Naive thymus-derived CD4-positive, alpha-beta T cell (primary cell): ENCODE measurements at regions of chr21 and their contacts with region 1.

Region 1: GRCh38 chr21:46228345-46229051 is at the start of gene LSS:
- DNase-seq: peak; percentile 91 to 97 (median 96)
- ATAC-seq: peak; percentile 98
- H3K4me3 ChIP-seq: peak within 1 kb of the TSS; percentile 65
- H3K4me3 Mint-ChIP-seq: peak within 1 kb of the TSS; percentile 81 to 99 (median 94)
- H3K27ac ChIP-seq: peak within 1 kb of the TSS; percentile 83
- H3K27ac Mint-ChIP-seq: peak within 1 kb of the TSS; percentile 83 to 98 (median 94)
- H3K4me1 ChIP-seq: peaks cover 15 to 18% of the 10 kb centered on the region in 2 donors
- H3K4me1 Mint-ChIP-seq: peaks cover 17 to 56% (median 43%) of the 10 kb centered on the region in 7 donors
- H3K27me3 ChIP-seq: no peaks in the 10 kb centered on the region
- H3K27me3 Mint-ChIP-seq: no peaks in the 10 kb centered on the region
- total RNA-seq, gene LSS: 41.3 to 64.4 (median 44.9) TPM

Region 2: GRCh38 chr21:45973659-45974072 is 254.8 kb before region 1 on chr21:
- CTCF ChIA-PET with region 1: interaction called, 3 read pairs
- POLR2A ChIA-PET with region 1: no interaction called
- intact Hi-C with region 1: loop called (anchors 2 to 5 kb)
- DNase-seq: peak; percentile 59 to 84 (median 77)
- ATAC-seq: peak; percentile 94
- H3K4me3 ChIP-seq: peak overlapping the region; percentile 78
- H3K4me3 Mint-ChIP-seq: peak overlapping the region; percentile 75 to 94 (median 92)
- H3K27ac ChIP-seq: peak overlapping the region; percentile 50
- H3K27ac Mint-ChIP-seq: peak overlapping the region in 8 of 9 donors; percentile 41 to 91 (median 80)
- H3K4me1 ChIP-seq: peaks cover 20 to 22% of the 10 kb centered on the region in 2 donors
- H3K4me1 Mint-ChIP-seq: peaks cover 5 to 28% (median 18%) of the 10 kb centered on the region in 7 donors
- H3K27me3 ChIP-seq: peaks cover 0 to 13% of the 10 kb centered on the region in 2 donors
- H3K27me3 Mint-ChIP-seq: peaks cover 0 to 44% (median 10%) of the 10 kb centered on the region in 5 donors

Region 3: DNA sequence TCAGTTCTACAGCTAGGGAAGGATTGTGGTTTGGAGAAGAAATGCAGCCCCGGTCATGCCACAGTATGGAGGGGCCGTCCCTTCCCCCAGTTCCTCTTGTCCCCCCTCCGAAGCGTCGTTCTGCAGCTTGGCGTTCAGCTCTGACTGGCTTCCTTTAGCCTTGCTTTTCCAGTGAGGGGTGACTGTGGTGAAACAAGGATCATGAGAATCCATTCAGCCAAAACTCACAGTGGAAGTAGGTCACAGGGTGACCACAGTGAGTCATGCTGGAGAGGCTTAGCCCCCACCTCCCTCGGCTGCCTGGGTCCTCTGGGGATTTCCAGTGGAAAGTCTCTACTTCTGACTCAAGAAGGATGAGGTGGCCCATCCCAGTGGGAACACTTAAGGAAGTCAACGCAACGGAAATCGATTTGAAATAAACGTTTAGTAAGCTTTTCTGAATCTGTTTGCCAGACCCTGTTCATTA is 167.9 kb before region 1 on chr21:
- CTCF ChIA-PET with region 1: no interaction called
- POLR2A ChIA-PET with region 1: no interaction called
- intact Hi-C with region 1: no loop called
- DNase-seq: peak in 2 of 9 donors; percentile 0 to 34
- ATAC-seq: peak; percentile 14
- H3K4me3 ChIP-seq: no peak overlapping the region
- H3K4me3 Mint-ChIP-seq: no peak overlapping the region
- H3K27ac ChIP-seq: no peak overlapping the region
- H3K27ac Mint-ChIP-seq: no peak overlapping the region
- H3K4me1 ChIP-seq: peaks cover 7 to 11% of the 10 kb centered on the region in 2 donors
- H3K4me1 Mint-ChIP-seq: peaks cover 8 to 22% (median 17%) of the 10 kb centered on the region in 7 donors
- H3K27me3 ChIP-seq: peaks cover 0 to 5% of the 10 kb centered on the region in 2 donors
- H3K27me3 Mint-ChIP-seq: peaks cover 17 to 58% (median 47%) of the 10 kb centered on the region in 5 donors

Region 4: DNA sequence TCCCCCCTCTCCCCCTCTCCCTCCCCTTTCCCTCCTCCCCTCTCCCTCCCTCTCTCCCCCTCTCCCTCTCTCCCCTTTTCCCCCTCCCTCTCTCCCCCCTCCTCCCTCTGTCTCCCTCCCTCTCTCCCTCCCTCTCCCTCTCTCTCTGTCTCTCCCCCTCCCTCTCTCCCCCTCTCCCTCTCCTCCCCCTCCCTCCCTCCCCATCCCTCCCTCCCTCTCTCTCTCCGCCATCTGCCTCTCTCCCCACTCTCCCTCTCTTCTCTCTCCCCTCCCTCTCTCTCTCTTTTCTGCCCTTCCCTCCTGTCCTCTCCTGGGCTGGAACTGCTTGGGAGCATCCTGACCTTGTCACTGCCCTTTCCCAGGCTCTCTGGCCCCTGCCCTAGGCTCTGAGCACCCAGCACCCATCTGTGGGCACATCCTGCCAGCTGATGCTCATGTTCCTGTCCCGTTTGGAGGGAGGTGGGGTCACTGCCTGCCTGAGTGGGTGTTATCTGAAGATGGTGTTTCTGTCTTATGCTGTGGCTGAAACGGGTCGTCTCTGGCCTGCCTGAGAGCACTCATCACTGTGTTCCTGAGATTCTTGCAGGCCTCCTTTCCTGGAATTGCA is 83.9 kb before region 1 on chr21:
- CTCF ChIA-PET with region 1: no interaction called
- POLR2A ChIA-PET with region 1: no interaction called
- intact Hi-C with region 1: loop called (anchors 1 to 5 kb)
- DNase-seq: no peak
- ATAC-seq: no peak
- H3K4me3 ChIP-seq: no peak overlapping the region
- H3K4me3 Mint-ChIP-seq: peak overlapping the region in 5 of 10 donors; percentile 29 to 89 (median 80)
- H3K27ac ChIP-seq: no peak overlapping the region
- H3K27ac Mint-ChIP-seq: peak overlapping the region in 6 of 9 donors; percentile 33 to 92 (median 59)
- H3K4me1 ChIP-seq: no peaks in the 10 kb centered on the region
- H3K4me1 Mint-ChIP-seq: peaks cover 6 to 13% (median 8%) of the 10 kb centered on the region in 7 donors
- H3K27me3 ChIP-seq: no peaks in the 10 kb centered on the region
- H3K27me3 Mint-ChIP-seq: no peaks in the 10 kb centered on the region

Region 5: DNA sequence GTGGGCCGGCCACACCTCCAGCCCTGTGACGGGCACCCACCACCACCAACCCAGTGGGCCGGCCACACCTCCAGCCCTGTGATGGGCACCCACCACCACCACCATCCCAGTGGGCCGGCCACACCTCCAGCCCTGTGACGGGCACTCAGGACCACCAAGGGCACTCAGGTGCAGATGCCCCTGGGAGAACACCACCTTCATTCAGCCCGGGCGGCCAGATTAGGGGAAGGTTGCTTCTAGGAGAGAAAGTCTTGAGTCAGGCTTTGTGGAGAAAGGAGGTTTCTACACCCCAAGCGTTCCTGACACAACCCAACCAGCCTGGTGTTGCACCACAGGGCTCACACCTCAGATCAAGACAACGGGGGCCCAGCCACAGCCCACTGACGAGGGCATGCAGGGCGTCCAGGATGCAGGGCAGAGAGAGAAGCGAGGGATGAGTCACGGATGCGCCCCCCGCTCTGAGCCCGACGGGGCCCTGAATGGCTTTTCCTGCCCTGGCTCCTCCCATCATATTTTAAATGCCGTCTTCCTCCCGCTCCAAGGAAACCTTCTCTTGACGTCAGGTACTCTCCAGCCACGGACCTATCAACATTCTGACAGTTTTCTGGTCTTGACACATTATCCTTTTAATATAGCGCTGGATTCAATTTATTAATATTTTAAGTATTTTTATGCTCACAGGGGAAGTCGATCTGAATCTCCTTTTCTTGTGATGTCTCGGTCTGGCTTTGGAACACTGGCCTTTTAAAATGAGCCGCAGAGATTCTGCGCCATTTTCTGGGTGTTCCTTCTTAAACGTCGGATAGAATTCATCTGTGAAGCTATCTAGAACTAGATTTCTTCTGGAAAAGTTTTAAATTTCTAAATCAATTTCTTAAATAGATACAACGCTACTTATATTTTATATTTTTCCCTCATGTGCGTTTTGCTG is 43.6 kb before region 1 on chr21:
- CTCF ChIA-PET with region 1: no interaction called
- POLR2A ChIA-PET with region 1: no interaction called
- intact Hi-C with region 1: loop called (anchors 1 to 2 kb)
- DNase-seq: peak; percentile 48 to 79 (median 74)
- ATAC-seq: peak; percentile 79
- H3K4me3 ChIP-seq: peak overlapping the region; percentile 67
- H3K4me3 Mint-ChIP-seq: peak overlapping the region; percentile 80 to 92 (median 86)
- H3K27ac ChIP-seq: peak overlapping the region; percentile 68
- H3K27ac Mint-ChIP-seq: peak overlapping the region; percentile 75 to 91 (median 86)
- H3K4me1 ChIP-seq: peaks cover 0 to 5% of the 10 kb centered on the region in 2 donors
- H3K4me1 Mint-ChIP-seq: peaks cover 0 to 16% (median 10%) of the 10 kb centered on the region in 7 donors
- H3K27me3 ChIP-seq: no peaks in the 10 kb centered on the region
- H3K27me3 Mint-ChIP-seq: no peaks in the 10 kb centered on the region

Region 6: GRCh38 chr21:46196726-46197125 is 31.8 kb before region 1 on chr21:
- CTCF ChIA-PET with region 1: no interaction called
- POLR2A ChIA-PET with region 1: no interaction called
- intact Hi-C with region 1: no loop called
- DNase-seq: peak in 1 of 9 donors; percentile 13
- ATAC-seq: no peak
- H3K4me3 ChIP-seq: no peak overlapping the region
- H3K4me3 Mint-ChIP-seq: no peak overlapping the region
- H3K27ac ChIP-seq: no peak overlapping the region
- H3K27ac Mint-ChIP-seq: no peak overlapping the region
- H3K4me1 ChIP-seq: no peaks in the 10 kb centered on the region
- H3K4me1 Mint-ChIP-seq: no peaks in the 10 kb centered on the region
- H3K27me3 ChIP-seq: no peaks in the 10 kb centered on the region
- H3K27me3 Mint-ChIP-seq: no peaks in the 10 kb centered on the region

Region 7: GRCh38 chr21:46285761-46286496 is 57.4 kb after region 1 on chr21 and contains the start of gene YBEY:
- CTCF ChIA-PET with region 1: no interaction called
- POLR2A ChIA-PET with region 1: no interaction called
- intact Hi-C with region 1: loop called (anchors 1 kb)
- DNase-seq: peak; percentile 70 to 91 (median 80)
- ATAC-seq: peak; percentile 95
- H3K4me3 ChIP-seq: peak within 1 kb of the TSS; percentile 58
- H3K4me3 Mint-ChIP-seq: peak within 1 kb of the TSS; percentile 89 to 99 (median 98)
- H3K27ac ChIP-seq: peak within 1 kb of the TSS; percentile 86
- H3K27ac Mint-ChIP-seq: peak within 1 kb of the TSS; percentile 92 to 98 (median 97)
- H3K4me1 ChIP-seq: peaks cover 27 to 31% of the 10 kb centered on the region in 2 donors
- H3K4me1 Mint-ChIP-seq: peaks cover 21 to 76% (median 62%) of the 10 kb centered on the region in 7 donors
- H3K27me3 ChIP-seq: no peaks in the 10 kb centered on the region
- H3K27me3 Mint-ChIP-seq: no peaks in the 10 kb centered on the region
- total RNA-seq, gene YBEY: 8.8 to 16.7 (median 15.6) TPM

Region 8: GRCh38 chr21:46334351-46335140 is 106.0 kb after region 1 on chr21:
- CTCF ChIA-PET with region 1: no interaction called
- POLR2A ChIA-PET with region 1: no interaction called
- intact Hi-C with region 1: no loop called
- DNase-seq: no peak
- ATAC-seq: no peak
- H3K4me3 ChIP-seq: no peak overlapping the region
- H3K4me3 Mint-ChIP-seq: no peak overlapping the region
- H3K27ac ChIP-seq: no peak overlapping the region
- H3K27ac Mint-ChIP-seq: no peak overlapping the region
- H3K4me1 ChIP-seq: no peaks in the 10 kb centered on the region
- H3K4me1 Mint-ChIP-seq: peaks cover 0 to 9% (median 4%) of the 10 kb centered on the region in 7 donors
- H3K27me3 ChIP-seq: no peaks in the 10 kb centered on the region
- H3K27me3 Mint-ChIP-seq: no peaks in the 10 kb centered on the region

Region 9: GRCh38 chr21:46458315-46459023 is 230.0 kb after region 1 on chr21 and contains the start of gene DIP2A:
- CTCF ChIA-PET with region 1: no interaction called
- POLR2A ChIA-PET with region 1: no interaction called
- intact Hi-C with region 1: loop called (anchors 1 to 5 kb)
- DNase-seq: peak; percentile 93 to 97 (median 96)
- ATAC-seq: peak; percentile 98
- H3K4me3 ChIP-seq: peak within 1 kb of the TSS; percentile 81
- H3K4me3 Mint-ChIP-seq: peak within 1 kb of the TSS; percentile 86 to 96 (median 92)
- H3K27ac ChIP-seq: peak within 1 kb of the TSS; percentile 94
- H3K27ac Mint-ChIP-seq: peak within 1 kb of the TSS; percentile 85 to 97 (median 91)
- H3K4me1 ChIP-seq: peaks cover 4 to 17% of the 10 kb centered on the region in 2 donors
- H3K4me1 Mint-ChIP-seq: peaks cover 28 to 62% (median 48%) of the 10 kb centered on the region in 7 donors
- H3K27me3 ChIP-seq: no peaks in the 10 kb centered on the region
- H3K27me3 Mint-ChIP-seq: no peaks in the 10 kb centered on the region
- total RNA-seq, gene DIP2A: 54.7 to 118 (median 108) TPM